Activated naive CD4-positive, alpha-beta T cell treated with anti-CD3 and anti-CD28 coated beads for 36 hours (primary cell): ENCODE measurements at regions of chr7 and their contacts with region 1.

Region 1: GRCh38 chr7:104848138-104848990 is 165.6 kb upstream of the KMT2E start:
- DNase-seq: peak; percentile 75
- H3K4me3 Mint-ChIP-seq: no peak overlapping the region
- H3K27ac Mint-ChIP-seq: no peak overlapping the region
- H3K4me1 Mint-ChIP-seq: no peaks in the 10 kb centered on the region
- H3K27me3 Mint-ChIP-seq: peaks cover 9% of the 10 kb centered on the region

Region 2: GRCh38 chr7:103573479-103574058 is 1274.8 kb before region 1 on chr7:
- CTCF ChIA-PET with region 1: interaction called, 5 read pairs
- intact Hi-C with region 1: loop called (anchors 2 kb)
- DNase-seq: no peak
- H3K4me3 Mint-ChIP-seq: no peak overlapping the region
- H3K27ac Mint-ChIP-seq: no peak overlapping the region
- H3K4me1 Mint-ChIP-seq: no peaks in the 10 kb centered on the region
- H3K27me3 Mint-ChIP-seq: peaks cover 2% of the 10 kb centered on the region

Region 3: GRCh38 chr7:104272767-104273384 is 575.5 kb before region 1 on chr7:
- CTCF ChIA-PET with region 1: no interaction called
- intact Hi-C with region 1: loop called (anchors 2 kb)
- DNase-seq: peak; percentile 18
- H3K4me3 Mint-ChIP-seq: no peak overlapping the region
- H3K27ac Mint-ChIP-seq: no peak overlapping the region
- H3K4me1 Mint-ChIP-seq: no peaks in the 10 kb centered on the region
- H3K27me3 Mint-ChIP-seq: peaks cover 28% of the 10 kb centered on the region

Region 4: GRCh38 chr7:104469166-104469820 is 379.1 kb before region 1 on chr7:
- CTCF ChIA-PET with region 1: no interaction called
- intact Hi-C with region 1: no loop called
- DNase-seq: no peak
- H3K4me3 Mint-ChIP-seq: no peak overlapping the region
- H3K27ac Mint-ChIP-seq: no peak overlapping the region
- H3K4me1 Mint-ChIP-seq: no peaks in the 10 kb centered on the region
- H3K27me3 Mint-ChIP-seq: no peaks in the 10 kb centered on the region

Region 5: DNA sequence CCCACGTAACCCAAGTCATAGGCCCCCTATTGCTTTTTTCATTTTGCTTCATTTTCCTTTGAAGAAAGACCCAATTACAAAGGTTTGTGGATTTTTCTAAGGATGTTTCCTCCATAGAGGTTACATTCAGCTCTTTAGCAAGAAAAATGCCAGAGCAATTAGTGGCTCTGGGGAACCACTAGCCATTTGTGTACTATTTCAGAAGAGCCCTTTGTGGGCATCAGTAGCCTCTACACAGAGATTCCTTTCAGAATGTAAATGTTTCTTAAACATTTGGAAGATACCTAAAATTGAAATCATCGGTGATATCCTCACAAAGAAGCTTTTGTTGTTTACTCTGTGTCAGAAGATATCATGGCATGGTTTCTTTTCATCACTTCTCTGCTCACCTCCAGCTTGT is 125.4 kb before region 1 on chr7:
- CTCF ChIA-PET with region 1: no interaction called
- intact Hi-C with region 1: loop called (anchors 10 kb)
- DNase-seq: no peak
- H3K4me3 Mint-ChIP-seq: no peak overlapping the region
- H3K27ac Mint-ChIP-seq: no peak overlapping the region
- H3K4me1 Mint-ChIP-seq: no peaks in the 10 kb centered on the region
- H3K27me3 Mint-ChIP-seq: no peaks in the 10 kb centered on the region

Region 6: DNA sequence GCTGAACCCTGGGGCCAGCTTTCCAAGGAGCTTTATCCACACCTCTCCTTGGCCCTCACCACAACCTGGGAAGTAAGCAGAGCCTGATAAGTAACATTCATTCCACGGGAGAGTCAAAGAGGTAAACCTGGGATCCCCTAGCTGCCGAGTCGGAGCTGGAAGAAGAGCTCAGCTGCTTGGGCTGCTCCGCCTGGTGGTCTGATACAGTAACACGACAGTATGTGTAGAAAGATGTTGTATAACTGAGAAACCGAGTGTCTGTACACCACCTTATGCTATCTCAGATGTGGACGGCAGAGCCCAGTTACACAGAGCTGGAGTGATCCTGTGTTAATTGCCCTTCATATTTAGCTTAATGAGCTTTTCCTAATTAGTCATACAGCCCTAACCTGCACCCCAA is 14.4 kb after region 1 on chr7:
- CTCF ChIA-PET with region 1: interaction called, 18 read pairs
- intact Hi-C with region 1: no loop called
- DNase-seq: no peak
- H3K4me3 Mint-ChIP-seq: no peak overlapping the region
- H3K27ac Mint-ChIP-seq: no peak overlapping the region
- H3K4me1 Mint-ChIP-seq: peaks cover 10% of the 10 kb centered on the region
- H3K27me3 Mint-ChIP-seq: peaks cover 3% of the 10 kb centered on the region

Region 7: GRCh38 chr7:105245398-105246114 is 397.2 kb after region 1 on chr7:
- CTCF ChIA-PET with region 1: no interaction called
- intact Hi-C with region 1: no loop called
- DNase-seq: no peak
- H3K4me3 Mint-ChIP-seq: no peak overlapping the region
- H3K27ac Mint-ChIP-seq: no peak overlapping the region
- H3K4me1 Mint-ChIP-seq: peaks cover 19% of the 10 kb centered on the region
- H3K27me3 Mint-ChIP-seq: no peaks in the 10 kb centered on the region